HCT116 (cell line): ENCODE measurements at regions of chr12 and their contacts with region 1.

Region 1: DNA sequence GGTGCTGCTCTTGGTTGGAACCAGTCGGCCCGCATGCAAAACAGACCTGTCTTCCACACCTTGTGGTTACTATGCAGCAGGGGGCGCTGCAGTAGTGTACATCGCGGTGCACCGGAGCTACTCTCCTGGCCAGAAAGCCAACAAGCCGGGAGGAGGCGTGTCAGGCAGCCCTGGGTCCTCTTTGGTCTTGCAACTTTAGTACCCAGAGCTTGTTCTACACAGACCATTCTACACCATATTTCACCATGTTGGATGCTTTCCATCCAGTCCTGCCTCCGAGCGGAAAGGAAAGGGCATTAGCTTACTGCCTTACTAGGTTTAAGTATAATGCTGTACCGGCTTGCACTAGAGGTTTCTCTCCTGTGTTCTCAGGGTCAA is 927 bp upstream of the TMTC2 start:
- DNase-seq: peak; percentile 86
- ATAC-seq: peak; percentile 69
- H3K4me3 ChIP-seq: peak overlapping the region; percentile 68 to 69
- H3K27ac ChIP-seq: peak overlapping the region; percentile 80
- H3K4me1 ChIP-seq: peaks cover 4 to 18% of the 10 kb centered on the region in 2 experiments; a peak in 3 of 4 replicates
- H3K27me3 ChIP-seq: no peaks in the 10 kb centered on the region
- CTCF ChIP-seq: peak; percentile 80 to 89 (median 82)
- POLR2A ChIP-seq: no peak
- RAD21 ChIP-seq: peak; percentile 95

Region 2: DNA sequence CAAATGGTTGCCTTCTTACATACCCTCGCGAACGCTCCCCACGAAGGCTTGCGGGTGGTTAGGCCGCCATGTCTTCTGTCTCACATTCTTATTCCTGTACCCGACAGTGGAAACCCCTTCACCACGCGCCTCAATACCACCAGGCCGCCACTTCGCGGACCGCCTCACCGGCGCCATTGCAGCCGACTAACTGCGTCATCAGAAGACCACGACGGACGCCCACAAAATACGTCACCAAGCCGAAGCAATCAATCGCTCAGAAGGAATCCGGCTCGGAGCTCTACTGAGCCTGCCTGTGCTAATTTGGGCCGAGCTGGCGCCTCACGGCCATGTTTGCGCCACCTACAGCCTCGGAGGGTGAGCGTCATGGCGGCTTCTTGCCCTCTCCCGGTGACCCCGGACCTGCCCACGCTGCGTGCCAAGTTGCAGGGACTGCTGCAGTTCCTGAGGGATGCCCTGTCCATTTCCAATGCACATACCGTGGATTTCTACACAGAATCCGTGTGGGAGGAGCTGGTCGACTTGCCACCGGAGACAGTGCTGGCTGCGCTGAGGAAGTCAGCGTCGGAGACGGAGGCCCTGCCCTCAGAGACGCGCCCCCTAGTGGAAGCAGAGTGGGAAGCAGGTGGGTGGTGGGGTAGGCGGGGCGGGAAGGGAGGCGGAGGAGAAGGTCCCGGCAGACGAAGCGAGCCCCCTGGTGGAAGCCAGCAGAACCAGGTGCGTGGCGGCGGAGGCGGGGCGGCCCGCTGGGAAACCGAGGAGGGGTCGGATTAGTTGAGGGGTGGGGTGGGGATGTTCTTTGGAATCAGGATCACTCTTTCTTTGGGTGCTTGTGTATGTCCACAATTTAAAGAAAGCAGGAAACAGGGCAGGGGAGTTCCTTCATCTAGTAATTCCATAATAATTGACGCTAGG is 327.3 kb before region 1 on chr12 and contains the starts of genes CCDC59 and METTL25:
- CTCF ChIA-PET with region 1: interaction called, 4 read pairs
- POLR2A ChIA-PET with region 1: no interaction called
- RAD21 ChIA-PET with region 1: no interaction called
- intact Hi-C with region 1: loop called (anchors 1 kb)
- DNase-seq: peak; percentile 97
- ATAC-seq: peak; percentile 95
- H3K4me3 ChIP-seq: peak within 1 kb of the TSS; percentile 84 to 88
- H3K27ac ChIP-seq: peak within 1 kb of the TSS; percentile 65
- H3K4me1 ChIP-seq: peaks cover 3 to 15% of the 10 kb centered on the region in 2 experiments; a peak in 3 of 4 replicates
- H3K27me3 ChIP-seq: no peaks in the 10 kb centered on the region
- CTCF ChIP-seq: peak; percentile 82 to 99 (median 89)
- POLR2A ChIP-seq: peak; percentile 63
- RAD21 ChIP-seq: peak; percentile 29; the same call in 1 of the 2 replicates
- total RNA-seq, gene CCDC59: 76.6 TPM
- total RNA-seq, gene METTL25: 4.4 TPM

Region 3: GRCh38 chr12:82415402-82415801 is 270.4 kb before region 1 on chr12:
- CTCF ChIA-PET with region 1: no interaction called
- POLR2A ChIA-PET with region 1: no interaction called
- RAD21 ChIA-PET with region 1: no interaction called
- intact Hi-C with region 1: no loop called
- DNase-seq: no peak
- ATAC-seq: no peak
- H3K4me3 ChIP-seq: no peak overlapping the region
- H3K27ac ChIP-seq: no peak overlapping the region
- H3K4me1 ChIP-seq: no peaks in the 10 kb centered on the region
- H3K27me3 ChIP-seq: no peaks in the 10 kb centered on the region
- CTCF ChIP-seq: no peak
- POLR2A ChIP-seq: no peak
- RAD21 ChIP-seq: no peak

Region 4: GRCh38 chr12:82650619-82651337 is 35.0 kb before region 1 on chr12:
- CTCF ChIA-PET with region 1: interaction called, 4 read pairs
- POLR2A ChIA-PET with region 1: interaction called, 12 read pairs
- RAD21 ChIA-PET with region 1: no interaction called
- intact Hi-C with region 1: no loop called
- DNase-seq: peak; percentile 99
- ATAC-seq: peak; percentile 94
- H3K4me3 ChIP-seq: peak overlapping the region in 1 of 2 experiments; percentile 25; a peak in 3 of 4 replicates
- H3K27ac ChIP-seq: peak overlapping the region; percentile 74
- H3K4me1 ChIP-seq: peaks cover 24 to 40% of the 10 kb centered on the region in 2 experiments
- H3K27me3 ChIP-seq: no peaks in the 10 kb centered on the region
- CTCF ChIP-seq: no peak
- POLR2A ChIP-seq: peak; percentile 64
- RAD21 ChIP-seq: no peak

Region 5: DNA sequence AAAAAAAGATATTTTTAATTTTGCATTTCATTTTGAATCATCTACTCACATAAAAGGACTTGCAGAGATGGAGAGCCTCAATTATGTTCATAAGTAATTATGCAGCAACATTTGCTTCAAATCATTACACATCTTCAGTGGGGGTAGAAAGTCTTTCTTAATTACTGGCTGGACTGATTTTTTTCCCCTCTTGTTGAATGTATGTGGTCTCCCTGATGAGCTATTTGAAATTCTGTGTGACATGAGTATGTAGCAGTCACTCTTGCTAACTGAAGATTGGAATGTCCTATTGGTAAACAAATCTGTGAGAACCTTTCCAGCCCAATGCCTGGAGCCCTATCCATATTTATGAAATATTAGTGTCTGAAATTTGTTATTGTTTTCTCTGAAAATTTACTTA is 140.7 kb after region 1 on chr12:
- CTCF ChIA-PET with region 1: no interaction called
- POLR2A ChIA-PET with region 1: no interaction called
- RAD21 ChIA-PET with region 1: no interaction called
- intact Hi-C with region 1: no loop called
- DNase-seq: no peak
- ATAC-seq: no peak
- H3K4me3 ChIP-seq: no peak overlapping the region
- H3K27ac ChIP-seq: no peak overlapping the region
- H3K4me1 ChIP-seq: no peaks in the 10 kb centered on the region
- H3K27me3 ChIP-seq: no peaks in the 10 kb centered on the region
- CTCF ChIP-seq: no peak
- POLR2A ChIP-seq: no peak
- RAD21 ChIP-seq: no peak

Region 6: GRCh38 chr12:82862069-82862841 is 176.5 kb after region 1 on chr12:
- CTCF ChIA-PET with region 1: no interaction called
- POLR2A ChIA-PET with region 1: no interaction called
- RAD21 ChIA-PET with region 1: no interaction called
- intact Hi-C with region 1: no loop called
- DNase-seq: no peak
- ATAC-seq: no peak
- H3K4me3 ChIP-seq: no peak overlapping the region
- H3K27ac ChIP-seq: no peak overlapping the region
- H3K4me1 ChIP-seq: peaks cover 11 to 18% of the 10 kb centered on the region in 2 experiments
- H3K27me3 ChIP-seq: no peaks in the 10 kb centered on the region
- CTCF ChIP-seq: no peak
- POLR2A ChIP-seq: no peak
- RAD21 ChIP-seq: no peak

Region 7: GRCh38 chr12:83005534-83006197 is 319.9 kb after region 1 on chr12:
- CTCF ChIA-PET with region 1: no interaction called
- POLR2A ChIA-PET with region 1: no interaction called
- RAD21 ChIA-PET with region 1: interaction called in 1 of 2 experiments, 4 read pairs
- intact Hi-C with region 1: loop called (anchors 1 kb)
- DNase-seq: no peak
- ATAC-seq: no peak
- H3K4me3 ChIP-seq: no peak overlapping the region
- H3K27ac ChIP-seq: no peak overlapping the region
- H3K4me1 ChIP-seq: no peaks in the 10 kb centered on the region
- H3K27me3 ChIP-seq: no peaks in the 10 kb centered on the region
- CTCF ChIP-seq: no peak
- POLR2A ChIP-seq: no peak
- RAD21 ChIP-seq: no peak

Region 8: DNA sequence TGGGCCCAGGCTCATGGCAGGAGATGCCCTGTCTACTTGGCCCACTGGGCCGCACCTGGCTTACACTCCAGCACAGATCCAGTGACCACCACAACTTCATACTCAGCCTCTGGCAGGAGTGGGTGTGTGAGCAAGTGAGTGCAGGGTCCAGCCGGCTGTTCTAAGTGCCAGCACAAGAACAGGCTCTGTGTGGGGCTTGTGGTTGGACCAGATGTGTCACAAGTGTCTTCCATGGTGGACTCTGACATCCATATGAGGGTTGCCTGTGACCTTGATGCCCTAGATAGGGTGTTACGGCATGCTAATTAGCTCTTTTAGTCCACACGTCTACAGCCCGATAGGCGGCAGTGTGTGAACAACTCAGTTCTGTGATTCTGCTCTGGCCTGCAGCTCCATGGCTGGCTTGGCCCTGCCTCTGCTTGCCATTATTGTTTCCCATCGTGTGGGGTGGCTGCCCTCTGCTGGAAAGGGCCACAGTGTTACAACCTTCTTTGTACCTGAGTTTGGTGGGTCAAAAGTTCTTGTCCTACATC is 1137.7 kb after region 1 on chr12:
- CTCF ChIA-PET with region 1: interaction called, 19 read pairs
- POLR2A ChIA-PET with region 1: no interaction called
- RAD21 ChIA-PET with region 1: interaction called in 1 of 2 experiments, 4 read pairs
- intact Hi-C with region 1: loop called (anchors 1 kb)
- DNase-seq: peak; percentile 44
- ATAC-seq: peak; percentile 75
- H3K4me3 ChIP-seq: no peak overlapping the region
- H3K27ac ChIP-seq: no peak overlapping the region
- H3K4me1 ChIP-seq: peaks cover 0 to 4% of the 10 kb centered on the region in 2 experiments; a peak in 1 of 4 replicates
- H3K27me3 ChIP-seq: no peaks in the 10 kb centered on the region
- CTCF ChIP-seq: peak; percentile 60 to 69 (median 62)
- POLR2A ChIP-seq: no peak
- RAD21 ChIP-seq: peak; percentile 83

Region 9: DNA sequence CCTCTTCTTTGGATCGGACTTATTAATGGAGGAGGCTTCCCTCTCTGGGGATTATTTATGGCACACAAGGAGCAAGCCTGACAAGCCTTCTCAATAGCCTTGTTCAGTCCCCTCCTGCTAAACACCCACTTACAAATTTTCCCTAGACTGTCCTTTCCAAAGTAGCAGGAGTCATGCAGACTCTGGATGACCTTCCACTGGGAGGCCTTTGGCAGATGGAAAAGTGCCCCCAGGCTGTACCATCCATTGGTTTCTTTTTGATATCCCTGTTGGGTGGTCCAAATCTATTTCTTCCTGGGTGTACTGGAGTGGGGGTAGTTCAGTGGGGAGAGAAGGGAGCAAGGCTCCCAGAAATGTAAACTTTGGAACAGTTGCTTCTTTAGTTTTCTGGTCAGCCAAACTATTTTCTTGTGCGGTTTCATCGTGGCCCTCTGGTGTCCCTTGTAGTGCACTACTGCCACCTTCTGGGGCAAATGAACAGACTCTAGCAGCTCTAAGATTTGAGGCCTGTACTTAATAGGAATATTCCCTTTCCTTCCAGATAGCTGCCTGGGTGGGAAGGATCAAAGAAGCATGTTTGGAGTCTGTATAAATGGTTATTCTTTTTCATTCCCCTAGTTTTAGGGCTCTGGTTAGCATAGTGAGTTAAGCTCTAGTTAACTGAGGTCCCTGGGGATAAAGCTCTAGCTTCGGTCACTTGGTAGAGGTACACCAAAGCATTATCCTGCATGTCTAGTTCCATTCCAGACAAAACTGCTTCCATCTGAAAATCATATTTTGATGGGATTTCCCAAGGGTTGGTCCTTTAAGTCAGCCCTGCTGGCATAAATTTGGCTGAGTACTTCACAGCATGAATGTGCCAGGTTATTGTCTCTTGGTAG is 1817.4 kb after region 1 on chr12:
- CTCF ChIA-PET with region 1: interaction called, 12 read pairs
- POLR2A ChIA-PET with region 1: no interaction called
- RAD21 ChIA-PET with region 1: interaction called in 1 of 2 experiments, 3 read pairs
- intact Hi-C with region 1: loop called (anchors 2 kb)
- DNase-seq: peak; percentile 42
- ATAC-seq: peak; percentile 90
- H3K4me3 ChIP-seq: no peak overlapping the region
- H3K27ac ChIP-seq: no peak overlapping the region
- H3K4me1 ChIP-seq: peaks cover 0 to 16% of the 10 kb centered on the region in 2 experiments; a peak in 2 of 4 replicates
- H3K27me3 ChIP-seq: no peaks in the 10 kb centered on the region
- CTCF ChIP-seq: peak; percentile 41 to 77 (median 65); a peak in 5 of 6 replicates
- POLR2A ChIP-seq: no peak
- RAD21 ChIP-seq: peak; percentile 78